ENCODE measurements at regions of chr17 and their contacts with region 1.

Region 1: GRCh38 chr17:78781948-78782916 is at the start of gene CYTH1:
- DNase-seq: peak; percentile 94 to 100 (median 96)
- ATAC-seq: peak; percentile 92
- H3K4me3 ChIP-seq: peak within 1 kb of the TSS; percentile 96
- H3K4me3 Mint-ChIP-seq: peak within 1 kb of the TSS; percentile 88 to 99 (median 94)
- H3K27ac ChIP-seq: peak within 1 kb of the TSS; percentile 95
- H3K27ac Mint-ChIP-seq: peak within 1 kb of the TSS; percentile 91 to 99 (median 96)
- H3K4me1 ChIP-seq: peaks cover 51 to 53% of the 10 kb centered on the region in 2 donors
- H3K4me1 Mint-ChIP-seq: peaks cover 25 to 64% (median 58%) of the 10 kb centered on the region in 7 donors
- H3K27me3 ChIP-seq: no peaks in the 10 kb centered on the region
- H3K27me3 Mint-ChIP-seq: no peaks in the 10 kb centered on the region
- total RNA-seq, gene CYTH1: 297 to 452 (median 420) TPM

Region 2: DNA sequence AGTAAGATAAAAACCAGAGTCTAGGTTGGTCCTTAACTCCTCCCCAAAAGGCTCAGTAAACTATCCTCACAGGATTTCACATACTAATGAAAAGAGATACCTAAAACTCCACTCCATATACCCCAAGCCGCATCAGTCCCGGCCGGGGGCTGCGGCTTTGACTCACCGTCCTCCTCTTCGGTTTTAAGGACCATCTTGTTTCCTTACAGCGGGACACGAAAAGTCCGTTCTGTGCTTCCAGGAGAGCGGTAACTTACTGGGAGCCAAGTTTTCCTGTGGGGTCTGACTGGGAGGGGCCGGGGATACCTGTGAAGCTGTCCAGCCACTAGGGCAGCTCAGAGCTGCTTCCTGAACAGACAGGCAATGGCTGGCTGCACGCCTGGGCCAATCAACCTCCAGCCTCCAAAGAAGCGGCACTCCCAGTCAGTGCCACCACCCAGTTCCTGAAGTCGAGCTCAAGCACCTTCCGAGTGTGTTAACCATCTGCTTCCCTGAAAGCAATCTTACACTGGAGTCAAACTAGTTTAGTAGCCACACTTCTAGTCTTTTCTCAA is 45.6 kb before region 1 on chr17:
- CTCF ChIA-PET with region 1: interaction called, 6 read pairs
- POLR2A ChIA-PET with region 1: interaction called, 18 read pairs
- intact Hi-C with region 1: loop called in 1 of 2 experiments (anchors 5 kb)
- DNase-seq: peak; percentile 45 to 82 (median 78)
- ATAC-seq: peak; percentile 91
- H3K4me3 ChIP-seq: peak overlapping the region; percentile 75
- H3K4me3 Mint-ChIP-seq: peak overlapping the region; percentile 90 to 97 (median 94)
- H3K27ac ChIP-seq: peak overlapping the region; percentile 79
- H3K27ac Mint-ChIP-seq: peak overlapping the region; percentile 88 to 95 (median 92)
- H3K4me1 ChIP-seq: peaks cover 71 to 80% of the 10 kb centered on the region in 2 donors
- H3K4me1 Mint-ChIP-seq: peaks cover 78 to 97% (median 88%) of the 10 kb centered on the region in 7 donors
- H3K27me3 ChIP-seq: no peaks in the 10 kb centered on the region
- H3K27me3 Mint-ChIP-seq: no peaks in the 10 kb centered on the region

Region 3: DNA sequence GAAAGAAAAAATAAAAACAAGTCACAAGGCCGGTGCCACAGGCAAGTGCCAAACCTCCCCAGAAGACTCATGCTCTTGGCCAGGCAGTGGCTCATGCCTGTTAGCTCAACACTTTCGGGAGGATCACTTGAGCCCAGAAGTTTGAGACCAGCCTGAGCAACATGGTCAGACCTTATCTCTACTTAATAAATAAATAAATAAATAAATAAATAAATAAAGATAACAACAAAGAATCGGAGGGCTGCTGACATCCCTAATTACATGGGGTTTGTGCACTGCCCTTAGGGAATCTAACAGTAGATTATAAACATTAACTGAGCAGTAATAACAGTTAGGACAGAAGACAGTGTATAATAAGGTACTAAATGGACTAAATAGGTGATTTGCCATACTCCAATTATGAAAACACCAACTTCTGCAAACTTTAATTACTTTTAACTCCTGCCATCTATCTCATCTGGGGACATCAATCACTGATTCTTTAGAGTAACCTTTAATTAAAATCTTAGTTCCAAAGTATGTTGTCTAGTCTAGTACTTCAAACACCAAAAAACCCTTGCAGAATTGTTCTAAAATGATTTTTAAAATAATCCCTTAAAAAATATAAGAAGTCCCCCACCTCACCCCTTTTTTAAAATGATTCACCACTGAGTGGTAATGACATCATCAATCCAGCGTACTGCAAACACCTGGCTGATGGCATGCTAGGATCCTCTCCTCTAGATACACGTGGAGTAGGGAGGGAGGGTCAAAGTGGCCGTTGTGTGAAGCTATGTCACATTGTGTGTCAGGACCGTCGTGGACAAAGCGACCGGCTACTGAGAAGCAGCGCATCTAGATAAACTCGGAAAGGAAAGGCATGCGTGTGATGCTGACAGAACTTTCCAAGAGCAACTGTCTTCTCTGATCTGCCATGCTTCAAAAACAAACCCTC is 28.6 kb before region 1 on chr17:
- CTCF ChIA-PET with region 1: interaction called, 6 read pairs
- POLR2A ChIA-PET with region 1: interaction called, 43 read pairs
- intact Hi-C with region 1: loop called (anchors 1 kb)
- DNase-seq: peak in 2 of 9 donors; percentile 52 to 82
- ATAC-seq: peak; percentile 53
- H3K4me3 ChIP-seq: no peak overlapping the region
- H3K4me3 Mint-ChIP-seq: peak overlapping the region; percentile 63 to 93 (median 79)
- H3K27ac ChIP-seq: peak overlapping the region; percentile 81
- H3K27ac Mint-ChIP-seq: peak overlapping the region; percentile 89 to 99 (median 95)
- H3K4me1 ChIP-seq: peaks cover 84 to 89% of the 10 kb centered on the region in 2 donors
- H3K4me1 Mint-ChIP-seq: peaks cover 61 to 94% (median 82%) of the 10 kb centered on the region in 7 donors
- H3K27me3 ChIP-seq: no peaks in the 10 kb centered on the region
- H3K27me3 Mint-ChIP-seq: no peaks in the 10 kb centered on the region

Region 4: DNA sequence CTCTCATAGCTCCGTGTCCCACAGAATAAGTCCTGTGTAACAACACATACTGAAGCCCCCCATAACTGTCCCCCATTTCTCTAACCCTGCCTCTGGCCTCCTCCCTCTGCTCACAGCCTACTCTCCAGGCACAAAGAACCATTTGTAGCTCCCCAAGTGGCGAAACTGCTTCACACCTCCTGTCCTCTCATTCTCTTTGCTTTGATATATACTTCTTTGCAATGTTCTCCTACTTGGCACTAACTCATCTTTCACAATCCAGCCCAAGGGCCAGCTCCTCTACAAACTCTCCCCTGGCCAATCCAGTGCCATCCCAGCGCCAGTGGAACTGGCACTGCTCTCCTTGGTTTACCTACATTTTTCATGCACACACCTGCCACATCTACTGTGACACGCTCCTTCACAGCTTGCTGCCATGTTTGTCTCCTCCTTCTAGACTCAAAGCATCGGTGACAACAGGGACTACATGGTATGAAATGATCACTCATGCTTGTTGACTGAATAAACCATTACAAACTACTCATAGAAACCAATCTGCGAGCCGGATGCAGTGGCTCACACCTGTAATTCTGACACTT is 12.9 kb before region 1 on chr17:
- CTCF ChIA-PET with region 1: interaction called, 3 read pairs
- POLR2A ChIA-PET with region 1: interaction called, 13 read pairs
- intact Hi-C with region 1: loop called (anchors 1 kb)
- DNase-seq: no peak
- ATAC-seq: peak; percentile 47
- H3K4me3 ChIP-seq: no peak overlapping the region
- H3K4me3 Mint-ChIP-seq: no peak overlapping the region
- H3K27ac ChIP-seq: peak overlapping the region; percentile 73
- H3K27ac Mint-ChIP-seq: no peak overlapping the region
- H3K4me1 ChIP-seq: peaks cover 90 to 93% of the 10 kb centered on the region in 2 donors
- H3K4me1 Mint-ChIP-seq: peaks cover 21 to 45% (median 40%) of the 10 kb centered on the region in 7 donors
- H3K27me3 ChIP-seq: no peaks in the 10 kb centered on the region
- H3K27me3 Mint-ChIP-seq: no peaks in the 10 kb centered on the region

Region 5: GRCh38 chr17:78806451-78806850 is 24.2 kb after region 1 on chr17:
- CTCF ChIA-PET with region 1: interaction called, 4 read pairs
- POLR2A ChIA-PET with region 1: interaction called, 10 read pairs
- intact Hi-C with region 1: no loop called
- DNase-seq: peak in 6 of 9 donors; percentile 49 to 80 (median 74)
- ATAC-seq: peak; percentile 80
- H3K4me3 ChIP-seq: no peak overlapping the region
- H3K4me3 Mint-ChIP-seq: peak overlapping the region in 9 of 10 donors; percentile 2 to 76 (median 58)
- H3K27ac ChIP-seq: peak overlapping the region; percentile 41
- H3K27ac Mint-ChIP-seq: peak overlapping the region; percentile 81 to 97 (median 85)
- H3K4me1 ChIP-seq: peaks cover 26 to 43% of the 10 kb centered on the region in 2 donors
- H3K4me1 Mint-ChIP-seq: peaks cover 21 to 52% (median 43%) of the 10 kb centered on the region in 7 donors
- H3K27me3 ChIP-seq: no peaks in the 10 kb centered on the region
- H3K27me3 Mint-ChIP-seq: no peaks in the 10 kb centered on the region